ENCODE measurements at regions of chr5 and their contacts with region 1.

Region 1: GRCh38 chr5:131589510-131590348 is 45.3 kb downstream of the RAPGEF6 start:
- DNase-seq: peak; percentile 38
- H3K4me3 ChIP-seq: no peak overlapping the region
- H3K27ac ChIP-seq: no peak overlapping the region
- H3K4me1 ChIP-seq: no peaks in the 10 kb centered on the region
- H3K27me3 ChIP-seq: no peaks in the 10 kb centered on the region
- CTCF ChIP-seq: peak; percentile 81

Region 2: DNA sequence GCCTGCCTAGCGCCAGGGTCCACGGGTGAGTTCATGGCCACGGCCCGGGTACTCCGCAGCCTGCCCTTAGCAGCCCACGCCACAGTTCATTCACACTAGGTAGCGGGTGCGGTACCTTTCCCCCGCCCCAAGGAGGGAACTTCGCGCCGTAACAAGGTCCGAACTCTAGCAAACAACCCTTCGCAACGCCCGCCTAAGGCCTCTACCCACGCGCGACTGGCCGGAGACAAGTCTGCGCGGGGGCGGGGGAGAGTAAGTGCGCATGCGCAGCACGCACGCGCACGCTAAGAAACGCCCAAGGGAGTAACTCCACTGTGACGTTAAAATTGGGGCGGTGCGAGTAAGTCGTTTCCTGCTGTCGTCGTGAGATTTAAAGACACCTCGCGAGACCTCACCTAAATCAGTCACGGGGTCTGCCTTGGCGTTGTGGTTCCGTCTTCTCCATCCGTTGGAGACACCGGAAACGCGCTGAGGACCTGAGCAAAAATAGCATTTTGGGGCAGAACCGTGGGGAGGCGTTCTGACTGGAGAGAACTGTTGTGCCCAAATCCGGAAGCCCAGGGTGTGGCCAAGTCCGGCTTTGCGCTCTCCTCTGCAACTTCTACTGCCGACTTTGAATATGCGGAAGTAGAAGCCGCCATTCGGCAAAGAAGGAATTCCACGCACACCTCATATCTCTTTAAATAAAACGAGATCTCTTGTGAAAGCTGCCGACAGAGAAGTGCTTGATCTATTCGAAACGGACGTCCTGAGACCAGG is 45.4 kb after region 1 on chr5 and contains the start of gene RAPGEF6:
- intact Hi-C with region 1: no loop called
- DNase-seq: peak; percentile 98
- H3K4me3 ChIP-seq: peak within 1 kb of the TSS; percentile 69
- H3K27ac ChIP-seq: peak within 1 kb of the TSS; percentile 100
- H3K4me1 ChIP-seq: peaks cover 18% of the 10 kb centered on the region
- H3K27me3 ChIP-seq: no peaks in the 10 kb centered on the region
- CTCF ChIP-seq: no peak
- total RNA-seq, gene RAPGEF6: 14.9 to 16.2 TPM

Region 3: DNA sequence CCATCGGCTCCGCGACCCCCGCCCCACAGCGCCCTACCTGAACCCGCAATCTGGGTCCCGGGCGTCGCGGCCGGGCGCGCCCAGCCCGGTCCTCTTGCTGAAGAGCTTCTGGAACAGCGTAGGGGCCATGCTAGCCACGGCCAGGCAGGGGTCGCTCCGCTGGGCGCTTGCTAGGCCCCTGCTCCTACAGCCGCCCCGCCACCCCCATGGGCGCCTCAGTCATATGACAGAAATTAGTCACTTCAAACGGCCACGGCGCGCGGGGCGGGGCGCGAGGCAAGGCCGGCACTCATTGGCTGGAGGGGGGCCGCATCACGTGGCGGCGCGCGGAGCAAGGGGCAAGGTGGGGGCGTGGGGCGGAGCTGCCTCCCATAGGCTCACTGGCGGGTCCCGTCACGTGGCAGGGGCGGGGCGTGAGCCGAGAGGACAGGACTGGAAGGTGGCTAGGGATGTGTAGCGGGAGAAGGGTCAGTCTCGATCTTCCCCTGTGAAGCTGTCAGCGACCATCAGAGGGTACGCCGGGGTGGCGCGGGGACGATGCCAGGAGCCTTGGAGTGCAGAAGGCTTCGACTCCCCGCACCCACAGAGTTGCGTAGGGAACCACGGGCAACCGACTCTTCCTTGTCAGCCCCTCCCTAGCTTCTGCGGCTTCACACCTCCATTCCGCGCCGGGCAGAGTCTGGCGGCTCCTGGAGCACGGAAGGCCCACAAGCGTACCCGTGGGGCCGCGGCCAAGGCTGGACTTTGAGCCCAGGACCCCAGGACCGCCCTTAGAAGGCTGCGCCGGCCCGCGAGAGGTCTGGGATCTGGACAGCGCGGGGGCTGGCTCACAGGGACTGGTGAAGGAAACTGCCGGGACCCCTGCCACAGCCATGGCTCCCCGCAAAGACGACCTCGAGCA is 207.3 kb after region 1 on chr5 and contains the start of gene FNIP1:
- intact Hi-C with region 1: loop called (anchors 5 kb)
- DNase-seq: peak; percentile 100
- H3K4me3 ChIP-seq: peak within 1 kb of the TSS; percentile 92
- H3K27ac ChIP-seq: peak within 1 kb of the TSS; percentile 98
- H3K4me1 ChIP-seq: no peaks in the 10 kb centered on the region
- H3K27me3 ChIP-seq: no peaks in the 10 kb centered on the region
- CTCF ChIP-seq: no peak
- total RNA-seq, gene FNIP1: 18.1 to 41.2 TPM

Region 4: DNA sequence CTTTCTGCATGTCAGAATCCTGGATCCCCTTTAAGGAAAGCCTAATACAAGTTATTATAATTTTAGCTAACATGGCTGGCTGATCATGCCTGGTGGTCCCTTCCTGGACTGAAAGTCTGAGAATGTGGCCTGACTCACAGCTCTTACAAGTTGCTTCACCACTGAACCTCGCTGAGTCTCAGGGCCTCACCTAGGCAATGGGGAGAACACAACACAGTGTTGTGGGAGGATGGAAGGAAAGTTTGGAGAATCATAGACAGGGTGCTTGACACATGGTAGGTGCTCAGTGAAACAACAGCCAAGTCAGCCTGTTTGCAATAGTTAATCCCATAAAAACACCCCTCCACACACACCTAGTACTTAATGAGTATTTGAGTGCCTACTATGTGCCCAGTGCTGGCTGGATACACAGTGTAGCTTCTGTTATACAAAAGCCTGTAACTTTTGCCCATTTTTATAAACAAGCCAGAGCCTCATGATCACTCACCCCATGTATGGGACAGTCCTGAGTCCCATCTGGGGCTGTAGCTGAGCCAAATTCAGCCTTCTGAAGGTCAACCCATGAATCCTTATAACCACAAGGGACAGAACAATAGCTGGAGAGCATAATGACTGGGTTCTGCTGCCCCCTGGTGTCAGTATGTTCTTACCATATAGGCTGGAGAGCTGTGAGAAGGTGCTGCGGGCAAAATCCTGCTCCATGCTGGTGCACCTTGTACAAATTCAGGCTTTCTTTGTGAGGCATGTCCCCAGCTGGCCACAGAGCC is 417.9 kb after region 1 on chr5:
- intact Hi-C with region 1: loop called (anchors 2 kb)
- DNase-seq: peak; percentile 85
- H3K4me3 ChIP-seq: no peak overlapping the region
- H3K27ac ChIP-seq: no peak overlapping the region
- H3K4me1 ChIP-seq: no peaks in the 10 kb centered on the region
- H3K27me3 ChIP-seq: peaks cover 16% of the 10 kb centered on the region
- CTCF ChIP-seq: peak; percentile 80